ENCODE measurements at regions of chr4 and their contacts with region 1.

Region 1: GRCh38 chr4:16289897-16290554 is 63.8 kb upstream of the TAPT1 start:
- DNase-seq: no peak
- H3K4me3 ChIP-seq: no peak overlapping the region
- H3K27ac ChIP-seq: no peak overlapping the region
- H3K4me1 ChIP-seq: peaks cover 0 to 7% (median 0%) of the 10 kb centered on the region in 4 experiments; a peak in 2 of 7 replicates
- H3K27me3 ChIP-seq: no peaks in the 10 kb centered on the region
- CTCF ChIP-seq: peak in 2 of 3 experiments; percentile 47 to 61; a peak in 2 of 4 replicates
- EP300 ChIP-seq: no peak
- POLR2A ChIP-seq: no peak
- RAD21 ChIP-seq: peak; percentile 79 to 82

Region 2: GRCh38 chr4:16264798-16265197 is 25.2 kb before region 1 on chr4:
- CTCF ChIA-PET with region 1: interaction called, 13 read pairs
- POLR2A ChIA-PET with region 1: no interaction called
- DNase-seq: no peak
- H3K4me3 ChIP-seq: no peak overlapping the region
- H3K27ac ChIP-seq: no peak overlapping the region
- H3K4me1 ChIP-seq: no peaks in the 10 kb centered on the region
- H3K27me3 ChIP-seq: peaks cover 0 to 1% (median 0%) of the 10 kb centered on the region in 4 experiments; a peak in 1 of 7 replicates
- CTCF ChIP-seq: peak in 2 of 3 experiments; percentile 25 to 41; a peak in 2 of 4 replicates
- EP300 ChIP-seq: no peak
- POLR2A ChIP-seq: no peak
- RAD21 ChIP-seq: peak; percentile 65 to 69

Region 3: DNA sequence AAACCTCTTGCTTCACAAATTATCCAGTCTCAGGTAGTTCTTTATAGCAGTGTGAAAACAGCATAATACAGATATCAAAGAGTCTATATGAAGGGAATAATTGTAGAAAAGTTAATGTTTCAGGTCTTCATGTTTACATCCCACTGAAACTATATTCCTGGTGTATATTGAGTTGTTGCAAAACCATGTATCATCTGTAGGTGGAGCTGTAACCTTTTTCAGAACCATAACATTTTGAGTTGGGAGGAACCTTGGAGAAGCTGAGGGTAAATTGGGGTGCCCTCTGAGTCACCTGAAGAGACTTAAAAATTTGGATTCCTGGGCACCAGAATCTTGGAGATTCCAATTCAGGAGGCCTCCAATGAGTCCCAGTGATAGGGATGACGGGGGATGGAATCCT is 11.8 kb before region 1 on chr4:
- CTCF ChIA-PET with region 1: interaction called, 13 read pairs
- POLR2A ChIA-PET with region 1: no interaction called
- DNase-seq: no peak
- H3K4me3 ChIP-seq: no peak overlapping the region
- H3K27ac ChIP-seq: no peak overlapping the region
- H3K4me1 ChIP-seq: no peaks in the 10 kb centered on the region
- H3K27me3 ChIP-seq: no peaks in the 10 kb centered on the region
- CTCF ChIP-seq: peak in 2 of 3 experiments; percentile 17 to 50; a peak in 2 of 4 replicates
- EP300 ChIP-seq: no peak
- POLR2A ChIP-seq: no peak
- RAD21 ChIP-seq: peak; percentile 44 to 49

Region 4: DNA sequence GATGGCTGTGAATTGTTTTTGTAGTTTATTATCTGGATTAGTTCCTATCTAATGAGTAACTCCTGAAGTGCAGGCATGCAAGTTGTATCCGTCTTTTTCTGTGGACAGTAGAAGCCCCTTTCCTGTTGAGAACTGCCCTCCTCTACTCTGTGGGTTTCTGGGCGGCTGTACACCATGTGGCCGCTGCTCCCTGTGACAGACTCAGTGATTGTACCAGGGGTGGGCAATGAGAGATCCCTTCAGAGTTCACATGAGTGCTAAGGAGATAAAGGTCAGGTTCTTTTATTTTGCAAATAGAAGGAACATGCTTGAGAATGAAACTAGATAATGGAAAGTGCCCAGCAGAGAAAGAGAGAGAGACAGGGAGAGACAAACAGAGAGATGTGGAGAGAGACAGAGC is 12.6 kb after region 1 on chr4:
- CTCF ChIA-PET with region 1: interaction called, 24 read pairs
- POLR2A ChIA-PET with region 1: interaction called, 3 read pairs
- DNase-seq: no peak
- H3K4me3 ChIP-seq: no peak overlapping the region
- H3K27ac ChIP-seq: no peak overlapping the region
- H3K4me1 ChIP-seq: 0 out of 7 replicates have a peak, but pooled peaks cover 0 to 3% (median 0%) of the 10 kb centered on the region in 4 experiments
- H3K27me3 ChIP-seq: no peaks in the 10 kb centered on the region
- CTCF ChIP-seq: no peak
- EP300 ChIP-seq: no peak
- POLR2A ChIP-seq: no peak
- RAD21 ChIP-seq: no peak

Region 5: DNA sequence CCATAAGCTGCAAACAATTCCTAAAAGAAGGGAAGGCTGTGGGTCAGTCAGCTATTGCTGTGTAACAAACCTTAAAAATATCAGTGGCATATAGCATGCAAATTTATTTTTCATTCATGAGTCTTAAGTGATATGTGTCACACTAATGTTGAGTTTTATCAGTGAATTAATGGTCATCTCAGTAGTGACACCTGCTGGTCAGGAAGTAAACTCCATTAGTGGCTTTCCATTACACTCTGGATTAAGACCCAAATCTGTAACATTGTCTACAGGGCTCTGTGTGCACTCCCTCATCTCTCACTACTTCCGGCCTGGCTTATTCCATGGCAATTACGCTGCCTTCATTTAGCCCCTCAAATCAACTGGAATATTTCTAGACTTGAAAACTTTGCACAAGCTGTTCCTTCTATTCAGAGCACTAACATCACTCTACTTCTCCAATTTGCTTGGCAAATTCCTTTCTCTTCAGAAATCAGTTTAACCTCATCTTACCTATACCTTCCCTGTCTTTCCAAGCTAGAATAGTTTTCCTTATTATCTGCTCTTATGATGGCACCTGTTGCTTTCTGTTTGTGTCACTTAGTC is 153.6 kb after region 1 on chr4:
- CTCF ChIA-PET with region 1: interaction called, 66 read pairs
- POLR2A ChIA-PET with region 1: no interaction called
- DNase-seq: no peak
- H3K4me3 ChIP-seq: no peak overlapping the region
- H3K27ac ChIP-seq: no peak overlapping the region
- H3K4me1 ChIP-seq: no peaks in the 10 kb centered on the region
- H3K27me3 ChIP-seq: peaks cover 4 to 7% (median 6%) of the 10 kb centered on the region in 4 experiments; a peak in 6 of 7 replicates
- CTCF ChIP-seq: peak in 2 of 3 experiments; percentile 44 to 70; a peak in 2 of 4 replicates
- EP300 ChIP-seq: no peak
- POLR2A ChIP-seq: no peak
- RAD21 ChIP-seq: peak; percentile 65 to 70

Region 6: GRCh38 chr4:16461362-16461761 is 171.3 kb after region 1 on chr4:
- CTCF ChIA-PET with region 1: no interaction called
- POLR2A ChIA-PET with region 1: no interaction called
- DNase-seq: no peak
- H3K4me3 ChIP-seq: no peak overlapping the region
- H3K27ac ChIP-seq: no peak overlapping the region
- H3K4me1 ChIP-seq: no peaks in the 10 kb centered on the region
- H3K27me3 ChIP-seq: no peaks in the 10 kb centered on the region
- CTCF ChIP-seq: no peak
- EP300 ChIP-seq: no peak
- POLR2A ChIP-seq: no peak
- RAD21 ChIP-seq: no peak

Region 7: GRCh38 chr4:16505726-16506125 is 215.7 kb after region 1 on chr4:
- CTCF ChIA-PET with region 1: interaction called, 10 read pairs
- POLR2A ChIA-PET with region 1: no interaction called
- DNase-seq: peak; percentile 27 to 55
- H3K4me3 ChIP-seq: no peak overlapping the region
- H3K27ac ChIP-seq: no peak overlapping the region
- H3K4me1 ChIP-seq: no peaks in the 10 kb centered on the region
- H3K27me3 ChIP-seq: no peaks in the 10 kb centered on the region
- CTCF ChIP-seq: peak; percentile 55 to 75 (median 62)
- EP300 ChIP-seq: no peak
- POLR2A ChIP-seq: no peak
- RAD21 ChIP-seq: peak; percentile 76 to 84

Region 8: DNA sequence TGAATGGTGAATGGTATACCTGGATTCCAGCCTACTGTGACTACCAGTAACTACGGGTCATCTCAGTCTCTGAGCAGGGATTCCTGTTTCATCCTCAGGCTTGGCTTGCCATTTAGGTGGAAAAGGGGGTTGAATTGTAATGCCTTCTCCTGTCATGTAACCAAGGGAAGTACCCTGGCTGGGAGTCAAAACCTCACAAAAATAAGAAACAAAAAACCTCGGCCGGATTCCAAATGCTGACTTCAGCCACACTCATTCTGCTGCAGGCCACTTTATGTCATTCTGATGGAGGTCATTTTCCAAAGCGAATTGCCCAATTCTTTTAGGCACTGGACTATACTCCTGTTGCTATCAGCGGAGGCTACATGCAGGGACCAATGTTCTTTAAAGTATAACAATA is 283.7 kb after region 1 on chr4:
- CTCF ChIA-PET with region 1: no interaction called
- POLR2A ChIA-PET with region 1: no interaction called
- DNase-seq: no peak
- H3K4me3 ChIP-seq: no peak overlapping the region
- H3K27ac ChIP-seq: no peak overlapping the region
- H3K4me1 ChIP-seq: no peaks in the 10 kb centered on the region
- H3K27me3 ChIP-seq: no peaks in the 10 kb centered on the region
- CTCF ChIP-seq: no peak
- EP300 ChIP-seq: no peak
- POLR2A ChIP-seq: no peak
- RAD21 ChIP-seq: no peak